AG04450 (cell line): ENCODE measurements at regions of chr11 and their contacts with region 1.

Region 1: DNA sequence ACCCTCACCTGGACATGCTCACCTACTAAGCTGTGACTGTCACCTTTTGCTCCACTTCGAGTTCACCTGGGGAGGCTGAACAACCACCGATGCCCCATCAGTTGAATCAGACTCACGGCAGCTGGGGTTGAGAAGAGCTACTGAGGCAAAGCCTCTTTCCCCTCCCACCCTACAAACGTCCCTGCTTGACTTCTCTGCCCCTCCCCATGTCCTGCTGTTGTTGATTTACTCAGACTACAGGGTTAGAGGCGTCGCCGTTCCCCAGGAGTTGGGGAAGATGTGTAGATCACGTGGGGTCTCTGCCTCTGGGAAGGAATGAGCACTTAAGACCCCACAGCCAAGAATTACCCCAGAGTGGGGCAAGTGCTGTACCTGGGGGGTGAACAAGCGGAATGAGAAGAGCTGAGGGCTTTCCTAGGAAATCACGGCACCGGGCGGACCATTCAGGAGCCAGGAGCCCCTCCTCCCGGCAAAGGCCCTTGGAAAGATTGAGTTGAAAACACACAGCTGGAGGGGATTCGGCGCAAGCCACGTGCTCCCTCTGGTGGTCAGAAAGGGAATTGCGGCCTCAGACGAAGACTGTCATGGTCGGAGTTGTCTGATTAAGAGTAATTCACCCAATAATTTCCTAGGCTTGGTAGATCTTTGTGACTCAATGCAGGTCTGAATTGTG is 7.0 kb downstream of the FXYD2 start:
- DNase-seq: peak; percentile 51
- H3K4me3 ChIP-seq: no peak overlapping the region
- H3K27ac ChIP-seq: no peak overlapping the region
- H3K27me3 ChIP-seq: no peaks in the 10 kb centered on the region
- CTCF ChIP-seq: peak; percentile 100

Region 2: DNA sequence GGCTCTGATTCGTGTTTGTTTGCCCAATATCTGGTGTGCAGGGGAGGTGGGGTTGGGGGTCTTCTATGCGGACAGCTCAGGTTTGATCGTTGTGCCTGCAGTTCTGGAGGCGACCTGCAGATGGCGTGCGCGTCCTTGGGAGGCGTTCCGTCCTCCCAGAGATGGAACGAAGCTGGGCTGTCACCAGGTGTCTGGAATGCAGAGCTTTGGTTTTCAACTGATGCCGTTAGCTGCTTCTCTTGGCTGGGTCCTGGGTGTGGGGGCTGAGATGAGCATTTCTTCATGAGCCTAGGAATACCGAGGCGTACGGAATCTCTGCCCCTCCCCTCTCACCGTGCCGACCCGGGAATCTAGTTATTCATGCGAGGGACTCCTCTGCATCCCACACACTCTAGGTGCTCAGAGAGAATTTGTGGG is 391.2 kb before region 1 on chr11:
- CTCF ChIA-PET with region 1: interaction called, 97 read pairs
- POLR2A ChIA-PET with region 1: interaction called, 3 read pairs
- DNase-seq: no peak
- H3K4me3 ChIP-seq: no peak overlapping the region
- H3K27ac ChIP-seq: no peak overlapping the region
- H3K27me3 ChIP-seq: peaks cover 18% of the 10 kb centered on the region
- CTCF ChIP-seq: peak; percentile 99

Region 3: GRCh38 chr11:117843666-117844484 is 26.4 kb after region 1 on chr11:
- CTCF ChIA-PET with region 1: interaction called, 41 read pairs
- POLR2A ChIA-PET with region 1: no interaction called
- DNase-seq: peak; percentile 20
- H3K4me3 ChIP-seq: no peak overlapping the region
- H3K27ac ChIP-seq: no peak overlapping the region
- H3K27me3 ChIP-seq: peaks cover 7% of the 10 kb centered on the region
- CTCF ChIP-seq: peak; percentile 98

Region 4: DNA sequence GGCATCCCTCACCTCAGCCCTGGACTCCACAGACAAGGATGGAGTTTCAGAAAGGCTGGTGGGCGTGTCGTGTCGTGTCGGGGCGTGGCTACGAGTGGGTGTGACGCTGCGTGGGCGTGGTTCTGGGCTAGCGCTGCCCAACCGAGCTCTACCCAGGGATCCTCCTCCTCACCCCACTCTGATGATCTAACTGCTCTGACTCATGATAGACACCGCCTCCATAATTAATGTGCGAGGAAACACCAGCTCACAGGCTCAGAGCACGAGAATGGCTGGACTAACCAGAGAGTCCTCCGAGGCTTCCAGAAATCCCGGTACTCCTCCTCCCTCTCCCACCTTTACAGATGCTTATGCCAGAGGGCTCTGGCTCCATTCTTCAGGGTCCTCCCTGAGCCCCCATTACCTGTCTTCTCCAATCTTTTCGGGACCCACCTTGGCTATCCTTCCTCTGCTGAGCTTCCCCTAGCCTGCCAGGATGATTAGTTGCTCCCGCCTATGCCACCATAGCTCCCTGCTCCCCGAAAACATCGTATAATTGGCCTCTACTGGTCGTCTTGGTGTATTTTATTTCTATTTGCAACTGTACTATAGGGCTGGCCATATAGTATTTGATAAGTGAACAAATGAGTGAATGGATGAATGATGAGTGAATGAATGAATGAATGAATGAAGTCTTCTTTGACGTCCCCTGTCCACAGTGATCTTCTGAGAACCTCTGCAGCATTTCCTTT is 89.9 kb after region 1 on chr11:
- CTCF ChIA-PET with region 1: interaction called, 12 read pairs
- POLR2A ChIA-PET with region 1: no interaction called
- DNase-seq: peak; percentile 70
- H3K4me3 ChIP-seq: no peak overlapping the region; the same call in 1 of the 2 replicates
- H3K27ac ChIP-seq: no peak overlapping the region
- H3K27me3 ChIP-seq: peaks cover 3% of the 10 kb centered on the region
- CTCF ChIP-seq: no peak

Region 5: DNA sequence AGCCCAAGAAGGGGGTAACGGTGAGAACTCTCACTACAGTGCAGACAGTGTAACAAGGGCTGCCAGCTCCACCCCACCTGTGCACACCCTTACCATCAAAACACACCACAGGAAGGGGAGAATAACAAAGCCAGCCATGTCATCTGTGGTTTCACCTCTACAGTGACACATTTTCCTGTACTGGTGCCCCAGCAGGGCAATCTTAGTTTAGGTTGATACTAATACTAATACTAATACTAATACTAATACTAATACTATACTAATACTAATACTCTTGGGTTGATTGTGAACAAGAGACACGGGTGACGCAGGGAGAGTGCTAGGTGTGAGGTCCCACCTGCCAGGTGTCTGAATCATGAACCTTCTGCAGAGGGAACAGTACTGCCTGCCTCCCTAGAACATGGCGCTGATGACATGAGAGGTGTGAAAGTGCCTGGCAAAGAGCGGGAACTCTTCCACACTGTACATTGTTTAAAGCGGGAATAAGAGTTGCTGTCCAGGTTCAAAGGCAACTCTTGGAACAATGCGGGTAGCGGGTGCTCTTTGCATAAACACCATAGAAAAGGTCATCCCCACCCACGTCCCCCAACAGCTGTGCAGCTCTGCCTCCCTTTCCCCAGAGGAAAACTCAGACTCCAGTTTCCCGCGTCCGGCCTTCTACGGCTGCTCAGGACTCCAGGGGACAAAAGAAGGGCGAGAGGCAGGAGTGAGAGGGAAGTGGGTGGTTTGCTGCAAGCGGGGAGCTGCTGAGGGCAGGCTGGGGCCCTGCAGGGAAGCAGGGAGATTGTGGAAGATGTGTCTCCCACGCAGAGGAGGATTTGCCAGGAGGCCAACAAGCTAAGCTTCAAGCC is 234.3 kb after region 1 on chr11:
- CTCF ChIA-PET with region 1: interaction called, 49 read pairs
- POLR2A ChIA-PET with region 1: no interaction called
- DNase-seq: no peak
- H3K4me3 ChIP-seq: no peak overlapping the region
- H3K27ac ChIP-seq: no peak overlapping the region
- H3K27me3 ChIP-seq: peaks cover 5% of the 10 kb centered on the region
- CTCF ChIP-seq: no peak